WTC11 (cell line): ENCODE measurements at regions of chr1 and their contacts with region 1.

Region 1: GRCh38 chr1:235328357-235329138 is at the start of gene GGPS1:
- DNase-seq: peak; percentile 96
- ATAC-seq: peak; percentile 88
- H3K4me3 Mint-ChIP-seq: no peak within 1 kb of the TSS
- H3K27ac Mint-ChIP-seq: no peak within 1 kb of the TSS
- H3K4me1 Mint-ChIP-seq: peaks cover 30% of the 10 kb centered on the region
- H3K27me3 Mint-ChIP-seq: no peaks in the 10 kb centered on the region
- CTCF ChIP-seq: no peak
- total RNA-seq, gene GGPS1: 37.3 to 43.5 TPM (median 39.2 TPM) in 3 replicates

Region 2: GRCh38 chr1:235307158-235308124 is 21.1 kb before region 1 on chr1:
- CTCF ChIA-PET with region 1: no interaction called
- POLR2A ChIA-PET with region 1: interaction called, 10 read pairs
- DNase-seq: no peak
- ATAC-seq: no peak
- H3K4me3 Mint-ChIP-seq: no peak overlapping the region
- H3K27ac Mint-ChIP-seq: no peak overlapping the region; the same call in 1 of the 2 replicates
- H3K4me1 Mint-ChIP-seq: peaks cover 16% of the 10 kb centered on the region
- H3K27me3 Mint-ChIP-seq: no peaks in the 10 kb centered on the region
- CTCF ChIP-seq: no peak

Region 3: GRCh38 chr1:235351898-235352297 is 23.4 kb after region 1 on chr1:
- CTCF ChIA-PET with region 1: no interaction called
- POLR2A ChIA-PET with region 1: no interaction called
- DNase-seq: no peak
- ATAC-seq: no peak
- H3K4me3 Mint-ChIP-seq: no peak overlapping the region
- H3K27ac Mint-ChIP-seq: no peak overlapping the region
- H3K4me1 Mint-ChIP-seq: peaks cover 1% of the 10 kb centered on the region; the same call in 1 of the 2 replicates
- H3K27me3 Mint-ChIP-seq: no peaks in the 10 kb centered on the region
- CTCF ChIP-seq: no peak

Region 4: GRCh38 chr1:235367000-235367908 is 38.7 kb after region 1 on chr1 and contains the start of gene TBCE:
- CTCF ChIA-PET with region 1: no interaction called
- POLR2A ChIA-PET with region 1: interaction called, 18 read pairs
- DNase-seq: peak; percentile 98
- ATAC-seq: peak; percentile 99
- H3K4me3 Mint-ChIP-seq: peak within 1 kb of the TSS; percentile 98
- H3K27ac Mint-ChIP-seq: peak within 1 kb of the TSS; percentile 99
- H3K4me1 Mint-ChIP-seq: peaks cover 20% of the 10 kb centered on the region
- H3K27me3 Mint-ChIP-seq: no peaks in the 10 kb centered on the region; the same call in 1 of the 2 replicates
- CTCF ChIP-seq: no peak
- total RNA-seq, gene TBCE: 33.3 to 40.1 TPM (median 34.8 TPM) in 3 replicates

Region 5: GRCh38 chr1:235415008-235415904 is 86.7 kb after region 1 on chr1:
- CTCF ChIA-PET with region 1: interaction called, 13 read pairs
- POLR2A ChIA-PET with region 1: interaction called, 5 read pairs
- DNase-seq: peak; percentile 69
- ATAC-seq: peak; percentile 90
- H3K4me3 Mint-ChIP-seq: no peak overlapping the region
- H3K27ac Mint-ChIP-seq: no peak overlapping the region
- H3K4me1 Mint-ChIP-seq: peaks cover 4% of the 10 kb centered on the region
- H3K27me3 Mint-ChIP-seq: no peaks in the 10 kb centered on the region
- CTCF ChIP-seq: peak; percentile 76